ENCODE measurements at regions of chr2 and their contacts with region 1.

Region 1: GRCh38 chr2:45778720-45779171 is 127.3 kb downstream of the PRKCE start:
- DNase-seq: peak; percentile 41
- H3K4me3 ChIP-seq: no peak overlapping the region
- H3K27ac ChIP-seq: no peak overlapping the region
- H3K4me1 ChIP-seq: no peaks in the 10 kb centered on the region
- H3K27me3 ChIP-seq: no peaks in the 10 kb centered on the region
- CTCF ChIP-seq: peak; percentile 79 to 82

Region 2: DNA sequence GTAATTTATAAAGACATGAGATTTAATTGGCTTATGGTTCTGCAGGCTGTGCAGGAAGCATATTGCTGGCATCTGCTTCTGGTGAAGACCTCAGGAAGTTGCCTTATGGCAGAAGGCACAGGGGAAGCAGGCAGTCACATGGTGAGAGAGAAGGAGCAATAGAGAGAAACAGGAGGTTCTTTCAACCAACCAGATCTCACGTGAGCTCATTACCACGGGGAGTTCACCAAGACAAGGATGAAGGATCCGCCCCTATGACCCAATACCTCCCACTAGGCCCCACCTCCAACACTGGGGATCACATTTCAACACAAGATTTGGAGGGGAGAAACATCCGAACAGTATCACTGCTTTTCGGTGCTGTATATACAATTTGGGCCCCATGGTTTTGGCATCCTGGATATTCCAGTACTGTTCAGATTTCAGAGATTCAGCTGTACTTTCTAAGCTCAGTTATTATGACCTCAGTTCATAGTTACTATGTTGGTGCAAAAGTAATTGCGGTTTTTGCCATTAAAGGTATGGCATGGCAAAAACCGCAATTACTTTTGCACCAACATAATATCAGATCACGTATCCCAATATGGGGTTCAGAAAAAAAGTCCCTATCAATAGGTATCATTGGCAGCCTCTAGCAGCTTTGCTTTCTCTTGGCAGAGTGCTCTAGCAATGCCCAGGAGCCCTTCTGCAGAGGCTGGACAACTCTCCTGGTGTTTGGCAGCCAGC is 1026.8 kb before region 1 on chr2:
- CTCF ChIA-PET with region 1: interaction called, 22 read pairs
- dilution Hi-C with region 1: no loop called
- in situ Hi-C with region 1: no loop called
- intact Hi-C with region 1: no loop called
- DNase-seq: no peak
- H3K4me3 ChIP-seq: no peak overlapping the region
- H3K27ac ChIP-seq: no peak overlapping the region
- H3K4me1 ChIP-seq: peaks cover 5% of the 10 kb centered on the region
- H3K27me3 ChIP-seq: no peaks in the 10 kb centered on the region
- CTCF ChIP-seq: no peak

Region 3: DNA sequence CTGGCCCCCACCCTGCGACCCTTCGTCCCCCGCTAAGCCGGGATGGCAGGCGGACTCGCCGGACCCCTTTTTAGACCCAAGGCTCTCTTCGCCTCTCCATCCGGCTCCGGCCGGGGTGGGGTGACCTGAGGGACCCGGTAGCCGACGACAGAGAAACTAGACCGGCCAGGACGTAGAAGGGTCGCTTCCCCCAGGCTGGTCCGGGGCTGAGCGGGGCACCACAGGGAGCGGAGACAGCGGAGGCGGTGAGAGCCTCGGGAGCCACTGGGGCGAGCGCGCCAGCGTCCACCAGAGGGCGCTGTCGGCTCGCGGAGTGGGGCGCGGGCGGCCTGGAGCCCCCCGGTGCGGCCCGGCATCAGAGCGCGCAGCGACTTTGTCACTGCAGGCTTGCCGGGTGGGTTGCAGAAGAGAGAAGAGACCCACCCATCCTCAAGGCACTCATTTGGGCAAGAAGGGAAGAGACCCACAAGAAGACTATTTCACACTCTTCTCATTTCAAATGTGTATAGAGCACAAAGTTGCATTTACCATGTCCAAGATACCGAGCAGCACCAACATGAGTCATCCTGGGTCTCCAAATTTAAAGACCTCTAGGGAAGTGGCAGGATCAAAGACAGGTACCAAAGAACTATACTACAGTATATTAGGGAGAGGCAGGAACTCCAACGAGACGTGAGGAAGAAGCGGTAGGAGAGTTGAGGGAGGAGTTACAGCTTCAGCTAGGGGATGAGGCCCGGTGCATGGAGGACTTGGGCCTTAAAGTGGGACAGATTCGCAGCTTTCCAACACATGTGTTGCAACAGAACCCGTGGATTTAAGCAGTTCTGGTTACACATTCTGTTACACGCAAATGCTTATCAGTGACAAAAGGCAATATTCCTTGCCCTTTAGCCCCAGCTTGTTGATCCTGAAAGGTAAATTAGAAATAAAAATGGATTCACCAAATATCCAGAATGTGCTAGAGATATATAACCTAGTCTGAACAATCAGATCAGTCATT is 134.9 kb before region 1 on chr2:
- CTCF ChIA-PET with region 1: no interaction called
- dilution Hi-C with region 1: no loop called
- in situ Hi-C with region 1: loop called (anchors 5 kb)
- intact Hi-C with region 1: loop called (anchors 1 kb)
- DNase-seq: peak; percentile 49
- H3K4me3 ChIP-seq: peak overlapping the region; percentile 48 to 65 (median 51)
- H3K27ac ChIP-seq: no peak overlapping the region
- H3K4me1 ChIP-seq: peaks cover 12% of the 10 kb centered on the region
- H3K27me3 ChIP-seq: peaks cover 2% of the 10 kb centered on the region
- CTCF ChIP-seq: peak; percentile 61 to 83

Region 4: DNA sequence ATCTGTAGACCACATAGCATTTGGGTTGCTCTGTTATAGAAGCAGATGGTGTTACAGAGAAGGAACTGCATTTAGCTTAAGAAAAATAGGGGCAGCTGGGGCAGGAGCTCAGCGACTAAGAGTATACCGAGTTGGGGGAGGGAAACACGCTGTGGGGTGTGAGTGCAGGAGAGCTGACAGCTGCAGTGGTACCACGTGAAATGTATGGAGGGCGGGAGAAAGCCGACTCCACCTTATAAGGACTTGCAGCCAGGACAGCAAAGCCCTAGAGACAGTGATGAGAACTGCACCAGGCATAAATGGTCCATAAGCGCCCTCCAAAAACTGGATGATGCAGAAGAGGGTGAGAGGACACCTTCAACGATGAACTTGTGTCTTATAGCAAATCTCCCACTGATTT is 110.3 kb after region 1 on chr2:
- CTCF ChIA-PET with region 1: no interaction called
- dilution Hi-C with region 1: no loop called
- in situ Hi-C with region 1: no loop called
- intact Hi-C with region 1: no loop called
- DNase-seq: no peak
- H3K4me3 ChIP-seq: no peak overlapping the region
- H3K27ac ChIP-seq: no peak overlapping the region
- H3K4me1 ChIP-seq: no peaks in the 10 kb centered on the region
- H3K27me3 ChIP-seq: no peaks in the 10 kb centered on the region
- CTCF ChIP-seq: no peak